Testis (tissue), 5 donors: ENCODE measurements at regions of chr5 and their contacts with region 1.

Region 1: DNA sequence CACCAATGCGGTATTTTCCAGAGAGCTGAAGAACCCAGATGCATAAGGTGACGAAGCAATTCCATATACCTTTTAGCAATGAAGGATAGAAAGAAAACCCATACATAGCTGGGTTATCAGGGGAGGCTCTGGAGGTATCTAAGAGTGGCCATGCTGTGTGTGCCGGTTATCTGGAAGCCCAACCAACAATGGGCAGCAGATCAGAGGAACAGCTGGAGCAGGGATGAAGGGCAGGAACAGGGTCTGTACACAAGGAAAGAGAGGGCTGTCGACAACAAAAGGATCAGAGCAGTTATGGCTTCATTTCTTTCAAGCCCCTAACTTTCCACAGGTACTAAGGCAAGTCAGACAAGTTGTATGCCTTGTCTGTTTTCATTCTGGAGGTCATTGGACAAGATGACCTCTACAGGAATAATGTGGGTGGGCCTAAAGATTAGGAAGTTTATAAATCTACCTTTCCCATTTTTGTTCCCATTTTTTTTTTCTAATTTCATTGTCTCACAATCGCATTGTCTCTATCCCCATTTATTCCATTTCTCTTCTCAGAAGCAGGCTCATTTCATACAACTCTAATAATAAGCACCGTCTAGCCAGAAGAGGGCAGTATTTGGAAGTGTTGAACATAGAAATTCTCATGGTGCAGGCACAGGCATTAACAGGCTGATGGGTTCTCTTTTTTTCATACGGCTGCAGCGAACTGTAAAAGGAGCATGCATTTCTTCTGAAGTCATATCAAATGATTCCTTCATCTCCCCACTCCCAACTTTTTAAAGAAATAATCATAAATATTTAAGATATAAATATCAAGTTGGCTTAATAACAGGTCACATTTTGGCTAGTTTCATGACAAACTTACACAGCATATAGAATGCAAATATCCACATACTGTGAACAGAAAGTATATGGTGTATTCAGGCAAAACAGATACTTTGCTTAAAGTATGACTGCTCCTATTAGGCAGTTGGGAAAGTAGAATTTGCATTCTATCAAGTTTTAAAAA is 63.5 kb downstream of the ZNF474 start:
- DNase-seq: peak; percentile 55
- H3K4me3 ChIP-seq: no peak overlapping the region
- H3K27ac ChIP-seq: no peak overlapping the region
- H3K4me1 ChIP-seq: peaks cover 3% of the 10 kb centered on the region
- H3K27me3 ChIP-seq: no peaks in the 10 kb centered on the region
- CTCF ChIP-seq: peak; percentile 39 to 62 (median 50)
- POLR2A ChIP-seq: no peak

Region 2: DNA sequence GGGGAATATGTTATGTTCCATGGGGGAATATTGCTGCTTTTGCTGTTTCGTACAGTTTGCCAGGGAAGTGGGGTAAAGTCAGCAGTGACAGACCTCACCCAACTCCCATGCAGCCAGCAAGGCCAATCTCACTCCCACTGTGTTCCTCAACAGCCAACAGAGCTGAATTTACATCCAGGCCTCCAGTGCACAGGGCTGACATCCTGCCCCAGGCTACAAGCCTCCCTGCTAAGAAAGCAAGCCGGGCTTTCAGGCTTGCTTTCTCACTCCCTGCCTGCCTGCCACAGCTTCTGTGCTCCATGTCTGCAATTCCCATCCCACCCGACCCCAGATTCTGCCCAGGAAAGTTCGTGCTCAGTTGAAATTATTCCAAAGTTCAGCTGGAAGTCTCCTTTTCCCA is 93.7 kb after region 1 on chr5:
- intact Hi-C with region 1: no loop called
- DNase-seq: no peak
- H3K4me3 ChIP-seq: no peak overlapping the region
- H3K27ac ChIP-seq: no peak overlapping the region
- H3K4me1 ChIP-seq: no peaks in the 10 kb centered on the region
- H3K27me3 ChIP-seq: no peaks in the 10 kb centered on the region
- CTCF ChIP-seq: no peak
- POLR2A ChIP-seq: no peak

Region 3: GRCh38 chr5:122413722-122414121 is 220.9 kb after region 1 on chr5:
- intact Hi-C with region 1: loop called (anchors 5 kb)
- DNase-seq: no peak
- H3K4me3 ChIP-seq: no peak overlapping the region
- H3K27ac ChIP-seq: no peak overlapping the region
- H3K4me1 ChIP-seq: no peaks in the 10 kb centered on the region
- H3K27me3 ChIP-seq: no peaks in the 10 kb centered on the region
- CTCF ChIP-seq: no peak
- POLR2A ChIP-seq: no peak